Vagina (tissue), 2 donors: ENCODE measurements at regions of chr16 and their contacts with region 1.

Region 1: GRCh38 chr16:11715246-11715947 is 27.3 kb downstream of the TXNDC11 start:
- DNase-seq: no peak
- H3K4me3 ChIP-seq: no peak overlapping the region
- H3K27ac ChIP-seq: no peak overlapping the region
- H3K4me1 ChIP-seq: peaks cover 14% of the 10 kb centered on the region
- H3K27me3 ChIP-seq: no peaks in the 10 kb centered on the region
- CTCF ChIP-seq: no peak
- POLR2A ChIP-seq: no peak

Region 2: DNA sequence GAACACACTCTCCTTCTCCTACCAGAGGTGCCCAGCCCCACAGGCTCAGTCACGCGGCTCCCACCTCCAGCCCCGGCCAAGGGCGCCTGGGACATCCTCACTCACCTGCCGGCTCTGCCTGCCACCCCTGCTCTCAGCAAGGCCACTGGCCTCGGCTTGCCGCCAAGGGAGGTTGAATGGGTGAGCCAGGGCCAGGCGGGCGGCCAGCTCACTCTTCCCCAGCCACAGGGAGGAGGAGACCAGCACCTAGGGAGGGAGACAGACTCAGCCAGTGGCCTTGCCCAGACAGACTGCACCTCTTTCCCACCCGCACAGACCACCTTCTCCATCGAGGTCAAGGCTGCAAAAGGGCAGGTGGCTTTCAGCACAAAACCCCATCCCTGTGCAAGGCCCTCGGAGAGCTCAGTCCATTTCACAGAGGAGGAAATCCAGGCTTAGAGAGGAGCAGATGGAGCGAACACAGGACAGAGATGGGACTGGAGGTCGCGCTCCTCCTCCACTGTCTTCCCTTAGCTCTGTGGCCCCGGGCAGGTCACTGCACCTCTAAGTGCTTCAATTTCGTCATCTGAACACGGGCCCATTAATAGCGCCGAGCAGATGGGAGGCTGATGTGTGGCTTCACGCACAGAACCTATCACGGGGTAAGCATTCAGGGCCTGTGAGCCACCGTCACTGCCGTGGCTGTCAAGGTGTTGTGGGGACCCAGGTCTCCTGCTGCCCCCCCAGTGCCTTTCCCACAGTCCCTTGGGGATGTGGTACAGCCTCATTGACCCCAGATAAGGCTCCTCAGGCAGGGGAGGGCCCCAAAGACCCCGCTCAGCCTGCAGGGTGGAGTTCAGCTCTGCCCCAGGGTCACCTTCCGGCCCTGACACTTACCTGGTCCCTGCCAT is 314.0 kb before region 1 on chr16:
- intact Hi-C with region 1: loop called (anchors 5 kb)
- DNase-seq: no peak
- H3K4me3 ChIP-seq: no peak overlapping the region
- H3K27ac ChIP-seq: no peak overlapping the region
- H3K4me1 ChIP-seq: peaks cover 17% of the 10 kb centered on the region
- H3K27me3 ChIP-seq: no peaks in the 10 kb centered on the region
- CTCF ChIP-seq: no peak
- POLR2A ChIP-seq: no peak

Region 3: GRCh38 chr16:11535471-11535870 is 179.9 kb before region 1 on chr16:
- intact Hi-C with region 1: loop called (anchors 10 kb)
- DNase-seq: no peak
- H3K4me3 ChIP-seq: no peak overlapping the region
- H3K27ac ChIP-seq: no peak overlapping the region
- H3K4me1 ChIP-seq: peaks cover 8% of the 10 kb centered on the region
- H3K27me3 ChIP-seq: no peaks in the 10 kb centered on the region
- CTCF ChIP-seq: no peak
- POLR2A ChIP-seq: no peak

Region 4: DNA sequence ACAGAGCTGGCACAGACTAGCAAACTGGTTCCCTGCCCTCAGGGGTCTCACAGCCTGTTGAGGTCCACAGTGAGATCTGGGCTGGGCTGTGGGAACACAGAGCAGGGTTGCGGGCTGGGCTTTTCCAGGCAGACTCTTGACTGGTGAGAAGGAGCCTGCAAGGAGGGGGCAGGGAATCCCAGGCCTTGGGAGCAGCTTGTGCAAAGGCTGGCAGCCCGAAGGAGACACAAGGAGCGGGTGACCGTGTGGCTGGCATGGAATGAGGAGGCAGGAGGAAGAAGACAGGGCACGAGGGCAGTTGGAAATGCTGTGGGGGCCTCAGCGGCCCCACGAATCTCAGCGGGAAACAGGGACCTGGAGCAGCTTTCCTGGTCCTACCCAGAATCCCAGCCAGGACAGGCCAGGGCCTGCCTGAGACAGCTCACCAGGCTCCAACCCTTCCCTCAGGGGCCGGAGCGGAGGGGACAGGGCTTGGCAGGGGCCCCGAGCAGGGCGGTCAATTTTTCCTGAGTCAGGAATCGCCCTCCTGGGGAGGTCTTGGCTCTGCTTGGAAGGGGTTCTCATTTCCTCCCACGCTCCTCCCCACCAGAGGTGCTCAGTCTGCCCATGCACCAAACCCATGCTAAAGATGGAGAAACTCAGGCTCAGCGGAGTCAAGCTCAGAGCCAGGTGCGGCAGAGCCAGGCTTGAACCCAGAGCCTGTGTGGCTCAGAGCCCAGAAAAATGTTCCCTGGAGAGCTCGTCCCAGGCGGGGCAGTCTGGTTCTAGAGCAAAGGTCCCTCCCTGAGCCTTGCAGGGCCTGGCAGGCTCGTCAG is 56.3 kb before region 1 on chr16:
- intact Hi-C with region 1: loop called (anchors 5 kb)
- DNase-seq: no peak
- H3K4me3 ChIP-seq: no peak overlapping the region
- H3K27ac ChIP-seq: no peak overlapping the region
- H3K4me1 ChIP-seq: no peaks in the 10 kb centered on the region
- H3K27me3 ChIP-seq: no peaks in the 10 kb centered on the region
- CTCF ChIP-seq: no peak
- POLR2A ChIP-seq: no peak

Region 5: GRCh38 chr16:13041646-13042290 is 1326.4 kb after region 1 on chr16:
- intact Hi-C with region 1: no loop called
- DNase-seq: no peak
- H3K4me3 ChIP-seq: no peak overlapping the region
- H3K27ac ChIP-seq: no peak overlapping the region
- H3K4me1 ChIP-seq: no peaks in the 10 kb centered on the region
- H3K27me3 ChIP-seq: no peaks in the 10 kb centered on the region
- CTCF ChIP-seq: no peak
- POLR2A ChIP-seq: no peak